KBM-7 (cell line): ENCODE measurements at regions of chrX and their contacts with region 1.

Region 1: DNA sequence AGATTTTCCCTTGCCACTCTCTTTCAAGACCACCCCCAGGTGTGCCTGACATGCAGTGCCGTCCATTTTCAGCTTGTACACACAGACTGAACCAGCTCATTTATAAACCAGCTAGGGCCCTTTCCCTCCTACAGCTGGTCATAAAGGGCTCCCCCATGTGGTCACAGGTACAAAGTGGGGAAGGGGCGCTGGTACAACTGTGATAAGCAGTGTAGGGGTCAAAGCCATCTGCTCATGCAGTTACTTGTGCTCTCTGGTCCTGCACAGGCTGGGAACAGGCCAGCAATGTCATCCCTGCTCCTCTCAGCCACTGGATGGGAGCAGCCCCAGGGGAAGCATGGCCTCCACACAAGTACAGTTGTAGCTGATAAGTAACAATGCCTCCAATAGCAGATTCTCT is 20.6 kb downstream of the GABRQ start:
- DNase-seq: no peak

Region 2: DNA sequence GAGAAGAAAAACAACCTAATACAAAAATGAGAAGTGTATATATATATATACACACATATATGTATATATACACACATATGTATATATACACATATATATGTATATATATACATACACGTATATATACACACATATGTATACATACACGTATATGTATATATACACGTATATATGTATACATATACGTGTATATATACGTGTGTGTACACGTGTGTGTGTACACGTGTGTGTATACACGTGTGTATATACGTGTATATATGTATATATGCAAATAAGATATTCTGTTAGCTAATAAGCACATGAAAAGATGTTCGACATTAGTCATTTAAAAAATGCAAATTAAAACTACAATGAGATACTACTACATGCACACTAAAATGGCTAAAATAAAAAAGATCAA is 427.2 kb before region 1 on chrX:
- in situ Hi-C with region 1: no loop called
- DNase-seq: no peak

Region 3: GRCh38 chrX:152915527-152916241 is 257.4 kb after region 1 on chrX:
- in situ Hi-C with region 1: loop called (anchors 25 kb)
- DNase-seq: peak; percentile 75

Region 4: GRCh38 chrX:152950786-152951185 is 292.5 kb after region 1 on chrX:
- in situ Hi-C with region 1: no loop called
- DNase-seq: no peak